Activated T-helper 2 cell treated with anti-CD3 and anti-CD28 coated beads, Interferon-gamma antibody, Interleukin-2, Interleukin-4, amounts not matched to agents 10 μg/mL and 5 μg/mL and 100 μg/mL, durations not matched to agents 14 hours and 24 hours and 36 hours (primary cell): ENCODE measurements at regions of chr17 and their contacts with region 1.

Region 1: GRCh38 chr17:77471984-77472461 is 331.3 kb downstream of the SEC14L1 start:
- DNase-seq: no peak
- H3K4me3 Mint-ChIP-seq: peak overlapping the region; percentile 74
- H3K27ac Mint-ChIP-seq: peak overlapping the region; percentile 90
- H3K4me1 Mint-ChIP-seq: peaks cover 78% of the 10 kb centered on the region
- H3K27me3 Mint-ChIP-seq: no peaks in the 10 kb centered on the region

Region 2: DNA sequence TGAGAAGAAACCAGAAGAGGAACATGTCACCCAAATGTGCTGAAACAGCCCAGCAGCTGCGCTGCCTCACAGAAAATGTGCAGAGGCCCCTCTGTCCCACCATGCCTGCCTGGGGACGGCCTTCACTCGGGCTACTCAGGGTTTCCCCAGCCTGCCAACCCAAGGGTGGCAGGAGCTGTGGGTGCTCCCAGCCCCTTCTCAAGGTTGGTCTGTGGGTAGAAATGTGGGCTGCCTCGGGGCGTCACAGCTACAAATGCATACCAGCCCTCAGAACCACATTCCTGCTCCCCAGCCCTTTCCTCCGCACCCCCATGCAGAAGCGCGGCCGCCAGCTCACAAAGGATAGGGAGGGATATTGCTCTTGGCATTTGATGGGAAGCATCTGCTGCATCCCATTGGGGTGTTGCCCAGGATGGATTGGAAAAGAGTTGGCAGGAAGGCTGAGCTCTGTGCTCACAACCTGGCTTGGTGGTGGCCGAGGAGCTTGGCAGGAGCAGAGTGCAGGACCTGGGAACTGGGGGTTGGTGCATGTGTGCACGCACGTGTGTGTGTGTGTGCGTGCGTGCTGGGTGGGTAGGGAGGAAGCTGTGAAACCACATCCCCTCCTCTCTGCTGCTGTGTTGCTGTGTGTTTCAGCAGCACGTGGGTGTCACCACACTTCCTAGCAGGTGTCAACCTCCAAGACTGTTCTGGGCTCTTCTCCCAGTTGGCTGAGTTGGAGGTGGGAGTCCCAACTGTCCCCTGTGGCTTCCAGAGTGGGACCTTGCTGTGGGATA is 26.9 kb before region 1 on chr17:
- intact Hi-C with region 1: loop called (anchors 2 kb)
- DNase-seq: peak; percentile 85
- H3K4me3 Mint-ChIP-seq: peak overlapping the region; percentile 77
- H3K27ac Mint-ChIP-seq: peak overlapping the region; percentile 99
- H3K4me1 Mint-ChIP-seq: peaks cover 84% of the 10 kb centered on the region
- H3K27me3 Mint-ChIP-seq: no peaks in the 10 kb centered on the region

Region 3: DNA sequence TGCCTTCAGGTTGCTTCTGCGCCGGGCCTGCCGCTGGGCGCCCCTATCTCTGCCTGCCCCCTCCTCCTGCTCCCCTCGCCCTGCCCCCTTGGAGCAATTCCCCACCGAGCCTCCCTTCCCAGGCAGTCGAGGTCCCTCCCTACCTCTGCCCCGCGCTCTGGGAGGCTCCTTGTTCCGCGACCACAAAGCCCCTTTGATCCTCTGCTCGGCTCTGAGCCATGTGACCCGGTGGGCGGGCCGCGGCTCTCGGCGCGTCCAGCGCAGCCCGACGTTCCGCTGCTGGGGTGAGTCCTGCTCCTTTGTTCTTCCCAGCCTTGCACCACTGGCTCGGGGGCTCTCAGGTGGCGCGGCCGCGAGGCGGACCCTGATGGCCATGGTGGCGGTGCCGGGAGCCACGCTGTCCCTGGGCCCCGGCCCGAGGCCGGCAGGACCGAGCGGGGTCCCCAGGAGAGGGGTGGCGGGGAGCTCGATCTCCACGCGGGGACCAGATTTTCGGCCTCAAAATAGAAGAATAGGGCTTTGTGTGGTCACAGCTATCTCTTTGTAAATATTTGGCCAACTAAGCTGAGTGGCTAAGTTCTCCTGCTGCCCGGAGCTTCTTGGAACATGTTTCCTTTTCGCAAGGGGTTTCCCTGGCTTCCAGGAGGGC is 20.7 kb before region 1 on chr17:
- intact Hi-C with region 1: loop called (anchors 2 kb)
- DNase-seq: peak; percentile 68
- H3K4me3 Mint-ChIP-seq: peak overlapping the region; percentile 99
- H3K27ac Mint-ChIP-seq: peak overlapping the region; percentile 93
- H3K4me1 Mint-ChIP-seq: peaks cover 52% of the 10 kb centered on the region
- H3K27me3 Mint-ChIP-seq: no peaks in the 10 kb centered on the region